Pancreas (tissue), 10 donors: ENCODE measurements at regions of chr14 and their contacts with region 1.

Region 1: DNA sequence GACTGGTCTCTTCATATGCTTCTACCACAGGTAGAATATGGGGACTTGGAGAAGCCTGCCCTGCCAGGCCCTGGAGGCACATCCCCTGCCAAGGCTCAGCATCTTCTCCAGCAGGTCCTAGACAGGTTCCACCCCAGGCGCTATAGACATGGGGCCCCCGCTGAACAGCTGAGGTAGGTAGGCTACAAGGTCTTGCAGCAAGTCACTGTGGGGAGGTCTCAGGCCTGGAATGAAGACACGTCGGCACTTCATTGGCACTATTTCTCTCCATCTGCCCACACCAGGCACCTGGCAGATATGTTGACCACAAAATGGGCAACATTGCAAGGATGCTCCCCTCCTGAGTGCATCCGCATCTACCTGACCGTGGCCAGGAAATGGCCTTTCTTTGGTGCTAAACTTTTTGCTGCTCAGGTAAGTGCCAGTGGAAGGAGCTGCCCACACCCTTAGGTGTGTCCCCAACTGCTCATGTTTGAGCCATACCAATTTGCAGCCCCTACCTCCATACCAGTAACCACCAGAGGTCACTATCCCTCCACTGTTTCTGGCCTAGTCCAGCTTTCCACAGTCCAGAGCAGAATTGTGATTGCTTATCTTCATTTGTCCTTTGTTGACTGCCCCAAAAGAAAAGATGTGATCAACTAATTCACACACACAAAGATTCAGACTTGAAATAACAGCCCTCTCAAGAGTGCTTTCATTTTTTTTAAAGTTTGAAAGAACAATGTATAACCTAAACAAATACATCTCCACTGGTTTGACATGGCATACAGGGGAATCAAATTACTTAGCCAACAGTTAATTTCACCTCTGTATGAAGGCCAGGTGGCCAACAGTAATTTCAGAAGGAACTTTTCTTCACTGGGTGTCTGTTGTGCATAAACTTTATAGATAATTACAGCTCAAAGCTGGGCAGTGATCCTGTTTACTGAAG is 16.1 kb downstream of the PIGH start:
- DNase-seq: peak in 2 of 6 donors; percentile 43 to 55
- ATAC-seq: peak; percentile 78 to 93 (median 91)
- H3K4me3 ChIP-seq: no peak overlapping the region
- H3K27ac ChIP-seq: no peak overlapping the region
- H3K4me1 ChIP-seq: no peaks in the 10 kb centered on the region
- H3K27me3 ChIP-seq: no peaks in the 10 kb centered on the region
- CTCF ChIP-seq: peak; percentile 26 to 53 (median 47)

Region 2: GRCh38 chr14:67269298-67270061 is 314.5 kb before region 1 on chr14:
- intact Hi-C with region 1: no loop called
- DNase-seq: no peak
- ATAC-seq: peak; percentile 31 to 77 (median 62)
- H3K4me3 ChIP-seq: no peak overlapping the region
- H3K27ac ChIP-seq: peak overlapping the region in 1 of 4 donors; percentile 13
- H3K4me1 ChIP-seq: peaks cover 11 to 19% (median 12%) of the 10 kb centered on the region in 3 donors
- H3K27me3 ChIP-seq: no peaks in the 10 kb centered on the region
- CTCF ChIP-seq: no peak

Region 3: DNA sequence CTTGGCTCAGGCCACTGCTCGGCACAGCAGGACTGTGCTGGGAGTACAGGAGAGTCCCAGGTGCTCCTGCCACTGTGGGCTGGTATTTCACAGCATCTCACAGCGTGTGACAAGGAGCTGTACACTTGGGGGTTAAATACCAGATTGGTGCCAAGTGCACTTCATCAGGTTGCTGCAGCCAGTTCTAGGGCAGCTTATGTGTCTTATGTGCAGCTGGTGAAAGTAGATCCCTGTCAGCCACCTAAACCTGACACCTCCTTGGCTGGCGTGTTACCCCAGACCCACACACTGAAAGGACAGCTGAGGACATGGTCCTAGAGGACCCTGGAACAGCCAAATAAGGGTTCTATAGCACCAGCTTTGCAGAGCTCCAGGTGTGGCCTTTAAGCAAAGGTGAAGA is 32.0 kb before region 1 on chr14:
- intact Hi-C with region 1: no loop called
- DNase-seq: no peak
- ATAC-seq: no peak
- H3K4me3 ChIP-seq: no peak overlapping the region
- H3K27ac ChIP-seq: no peak overlapping the region
- H3K4me1 ChIP-seq: no peaks in the 10 kb centered on the region
- H3K27me3 ChIP-seq: no peaks in the 10 kb centered on the region
- CTCF ChIP-seq: no peak

Region 4: DNA sequence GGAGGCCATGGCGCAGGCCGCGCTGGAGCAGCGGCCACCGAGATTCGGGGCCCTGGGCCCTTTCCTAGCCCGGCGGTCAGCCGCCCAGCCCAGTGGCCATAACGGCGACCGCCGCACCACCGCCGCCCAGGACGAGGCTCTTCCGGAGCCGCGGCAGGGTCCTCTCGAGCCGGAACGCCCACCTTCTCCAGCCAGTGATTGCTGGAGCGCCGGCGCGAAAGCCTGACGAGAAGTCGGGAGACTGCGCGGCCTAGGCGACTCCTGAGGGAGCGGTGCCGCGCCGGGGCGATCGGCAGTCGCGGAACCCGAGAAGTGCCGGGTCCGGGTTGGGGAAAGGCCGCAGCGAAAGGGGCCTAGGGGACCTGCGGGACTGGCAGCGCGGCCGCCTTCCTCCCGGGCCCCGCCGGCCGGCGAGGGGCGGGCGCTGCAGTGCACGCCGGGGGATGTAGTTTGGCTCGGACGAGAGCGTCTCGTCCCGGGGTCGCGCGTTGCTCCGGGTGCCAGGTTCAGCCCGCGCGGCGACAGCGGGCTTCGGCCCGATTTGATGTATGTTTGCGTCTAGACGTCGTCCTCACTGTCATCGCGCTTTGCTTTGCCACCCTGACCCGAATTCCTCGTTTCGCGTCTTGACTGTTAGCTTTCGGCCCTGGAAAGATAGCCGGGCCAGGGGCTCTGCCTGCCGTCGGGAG is 90.6 kb after region 1 on chr14 and contains the start of gene VTI1B:
- intact Hi-C with region 1: loop called in 1 of 3 experiments (anchors 10 kb)
- DNase-seq: peak; percentile 78 to 88 (median 80)
- ATAC-seq: peak; percentile 94 to 97 (median 95)
- H3K4me3 ChIP-seq: peak within 1 kb of the TSS; percentile 89 to 100 (median 96)
- H3K27ac ChIP-seq: peak within 1 kb of the TSS; percentile 98 to 100 (median 100)
- H3K4me1 ChIP-seq: peaks cover 0 to 24% (median 4%) of the 10 kb centered on the region in 3 donors
- H3K27me3 ChIP-seq: no peaks in the 10 kb centered on the region
- CTCF ChIP-seq: no peak
- total RNA-seq, gene VTI1B: 48.0 to 73.3 (median 54.5) TPM

Region 5: DNA sequence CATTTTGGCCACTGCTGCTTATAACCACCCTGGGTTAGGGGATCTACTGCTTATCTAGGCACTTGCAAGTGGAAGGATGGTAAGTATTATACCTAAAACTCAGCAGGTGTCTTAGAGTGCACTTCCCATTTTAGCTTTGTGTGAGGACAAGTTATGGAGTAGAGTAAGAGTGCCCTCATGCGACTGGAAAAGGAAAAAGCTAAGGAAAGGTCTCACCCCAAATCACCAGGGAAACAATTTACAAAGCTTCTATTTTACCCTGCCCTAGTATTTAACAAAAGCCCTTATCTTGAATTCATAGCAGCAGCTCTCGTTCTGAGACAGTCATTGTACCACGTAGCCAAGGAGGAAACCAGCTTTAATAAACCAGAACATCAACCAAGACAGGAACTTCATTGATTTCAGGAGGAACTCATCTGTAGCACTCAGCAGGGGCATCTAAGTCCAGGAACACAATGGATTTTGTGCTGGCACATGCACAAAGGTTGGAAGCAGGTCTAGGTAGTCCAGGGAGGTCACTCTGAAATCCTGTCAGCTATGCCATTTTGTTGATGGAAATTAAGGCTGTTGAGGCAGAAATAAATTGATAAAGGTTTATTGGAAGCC is 120.6 kb after region 1 on chr14:
- intact Hi-C with region 1: loop called in 2 of 3 experiments (anchors 10 kb)
- DNase-seq: peak in 2 of 6 donors; percentile 28 to 41
- ATAC-seq: peak; percentile 76 to 96 (median 94)
- H3K4me3 ChIP-seq: no peak overlapping the region
- H3K27ac ChIP-seq: peak overlapping the region in 1 of 4 donors; percentile 39
- H3K4me1 ChIP-seq: peaks cover 0 to 9% (median 0%) of the 10 kb centered on the region in 3 donors
- H3K27me3 ChIP-seq: no peaks in the 10 kb centered on the region
- CTCF ChIP-seq: peak in 3 of 4 donors; percentile 42 to 50 (median 46)